ENCODE measurements at regions of chr6 and their contacts with region 1.

Region 1: GRCh38 chr6:4210629-4211423 is 75.5 kb upstream of the ECI2 start:
- DNase-seq: peak; percentile 72
- ATAC-seq: peak; percentile 94
- H3K4me3 ChIP-seq: no peak overlapping the region
- H3K4me3 Mint-ChIP-seq: peak overlapping the region; percentile 65
- H3K27ac ChIP-seq: peak overlapping the region in 1 of 2 donors; percentile 0
- H3K27ac Mint-ChIP-seq: peak overlapping the region; percentile 86
- H3K4me1 ChIP-seq: peaks cover 28 to 34% of the 10 kb centered on the region in 2 donors
- H3K4me1 Mint-ChIP-seq: peaks cover 35% of the 10 kb centered on the region
- H3K27me3 ChIP-seq: peaks cover 0 to under 1% (median under 1%) of the 10 kb centered on the region in 4 experiments
- H3K27me3 Mint-ChIP-seq: peaks cover 3% of the 10 kb centered on the region
- CTCF ChIP-seq: peak; percentile 83

Region 2: GRCh38 chr6:4055420-4056041 is 155.3 kb before region 1 on chr6:
- CTCF ChIA-PET with region 1: interaction called, 16 read pairs
- POLR2A ChIA-PET with region 1: no interaction called
- intact Hi-C with region 1: loop called (anchors 2 kb)
- DNase-seq: no peak
- ATAC-seq: no peak
- H3K4me3 ChIP-seq: no peak overlapping the region
- H3K4me3 Mint-ChIP-seq: no peak overlapping the region
- H3K27ac ChIP-seq: no peak overlapping the region
- H3K27ac Mint-ChIP-seq: no peak overlapping the region
- H3K4me1 ChIP-seq: no peaks in the 10 kb centered on the region
- H3K4me1 Mint-ChIP-seq: no peaks in the 10 kb centered on the region
- H3K27me3 ChIP-seq: no peaks in the 10 kb centered on the region
- H3K27me3 Mint-ChIP-seq: no peaks in the 10 kb centered on the region
- CTCF ChIP-seq: no peak

Measured in B cell (primary cell).